Posterior vena cava (tissue), 2 donors: ENCODE measurements at regions of chr1 and their contacts with region 1.

Region 1: GRCh38 chr1:233394860-233395717 is 67.6 kb downstream of the MAP3K21 start:
- DNase-seq: no peak

Region 2: DNA sequence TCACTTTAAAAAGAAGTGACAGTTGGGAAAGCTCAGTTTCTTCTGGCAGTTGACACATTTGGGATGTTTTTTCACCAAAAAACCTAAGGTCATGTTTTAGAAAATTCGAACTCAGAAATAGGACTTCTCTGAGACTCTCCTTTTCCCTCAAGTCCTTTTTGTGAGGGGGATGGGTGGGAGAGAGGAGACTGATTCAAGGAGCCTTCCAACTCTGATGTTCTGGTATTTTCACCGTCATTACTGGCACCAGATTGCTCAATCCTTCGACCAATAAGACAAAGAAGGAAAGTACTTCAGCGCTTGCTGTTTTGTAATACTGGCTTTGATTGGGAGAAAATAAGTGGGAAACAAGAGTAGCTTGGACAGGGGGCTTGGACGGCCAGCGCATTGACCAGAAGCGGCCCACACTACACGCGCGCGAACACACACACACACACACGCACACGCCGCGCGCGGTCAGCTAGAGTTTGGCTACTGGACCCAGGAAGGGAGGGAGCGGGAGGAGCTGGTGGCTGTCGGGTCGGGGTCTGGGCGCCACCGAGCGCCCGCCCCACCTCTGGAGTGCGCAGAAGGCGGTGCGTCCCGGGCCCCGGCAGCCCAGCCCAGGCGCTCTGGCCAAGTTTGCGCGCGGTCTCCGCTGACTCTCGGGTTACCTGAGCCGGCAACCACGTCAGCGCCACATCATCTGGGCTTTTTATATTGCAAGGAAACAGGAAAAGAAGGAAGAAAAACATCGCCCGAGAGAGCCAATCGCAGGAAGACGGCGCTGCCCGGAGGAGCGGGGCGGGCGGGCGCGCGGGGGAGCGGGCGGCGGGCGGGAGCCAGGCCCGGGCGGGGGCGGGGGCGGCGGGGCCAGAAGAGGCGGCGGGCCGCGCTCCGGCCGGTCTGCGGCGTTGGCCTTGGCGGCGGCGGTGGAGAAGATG is 218.4 kb after region 1 on chr1 and contains the start of gene KCNK1:
- intact Hi-C with region 1: no loop called
- DNase-seq: peak; percentile 87
- total RNA-seq, gene KCNK1: 3.2 to 6.3 TPM

Region 3: DNA sequence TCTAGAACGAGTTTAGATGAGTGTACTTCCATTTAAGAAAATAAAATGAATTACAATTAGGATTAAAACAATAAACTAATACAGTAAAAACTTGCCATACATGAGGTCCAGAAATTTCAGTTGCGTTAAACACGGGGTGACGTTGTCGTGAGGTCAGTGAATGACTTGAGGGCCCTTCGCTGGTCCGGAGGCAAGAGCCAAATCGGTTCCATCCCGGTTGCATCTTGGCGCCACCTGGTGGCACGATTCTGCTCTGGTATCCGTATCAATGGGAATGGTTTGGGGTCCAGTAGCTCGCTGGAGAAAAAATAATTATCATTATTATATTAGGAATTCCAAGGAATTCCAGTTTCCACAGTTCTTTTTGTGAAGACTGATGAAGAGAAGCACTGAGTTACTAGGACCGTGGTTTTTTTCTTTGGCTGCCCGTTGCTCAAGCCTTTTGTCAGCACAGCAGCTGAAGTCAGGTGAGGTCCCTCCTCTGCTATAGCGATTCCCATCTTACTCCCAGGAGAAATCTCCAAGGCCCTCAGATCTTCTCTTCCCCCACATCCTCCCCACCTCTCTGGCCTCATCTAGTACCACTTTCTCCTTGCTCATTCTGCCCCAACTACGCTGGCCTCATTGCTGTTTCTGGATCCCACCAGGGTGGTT is 670.8 kb after region 1 on chr1:
- intact Hi-C with region 1: loop called in 1 of 2 experiments (anchors 10 kb)
- DNase-seq: peak; percentile 92